ENCODE measurements at regions of chr6 and their contacts with region 1.

Region 1: DNA sequence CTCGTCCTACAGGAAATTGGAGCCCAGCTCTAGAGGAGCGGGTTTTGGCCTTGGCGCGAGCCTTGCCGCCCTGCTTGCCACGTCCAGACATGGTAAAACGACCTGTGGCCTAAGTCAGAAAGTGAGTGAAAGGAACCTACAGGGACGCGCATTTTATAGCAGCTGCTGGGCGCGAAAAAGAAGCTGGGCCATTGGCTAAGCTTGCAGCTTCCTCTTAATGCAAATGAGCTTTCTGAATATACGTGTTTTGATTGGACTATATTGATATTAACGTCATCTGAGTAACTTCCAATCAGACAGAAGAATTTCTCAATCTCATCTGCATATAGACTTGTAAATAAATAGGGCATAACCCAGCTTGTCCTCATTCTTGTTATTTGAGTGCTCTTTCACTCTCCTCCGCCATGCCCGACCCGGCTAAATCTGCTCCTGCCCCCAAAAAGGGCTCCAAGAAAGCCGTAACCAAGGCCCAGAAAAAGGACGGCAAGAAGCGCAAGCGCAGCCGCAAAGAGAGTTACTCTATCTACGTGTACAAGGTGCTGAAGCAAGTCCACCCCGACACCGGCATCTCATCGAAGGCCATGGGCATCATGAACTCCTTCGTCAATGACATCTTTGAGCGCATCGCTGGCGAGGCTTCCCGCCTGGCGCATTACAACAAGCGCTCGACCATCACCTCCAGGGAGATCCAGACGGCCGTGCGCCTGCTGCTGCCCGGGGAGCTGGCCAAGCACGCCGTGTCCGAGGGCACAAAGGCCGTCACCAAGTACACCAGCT is 18.9 kb downstream of the OR2B2 start:
- DNase-seq: peak; percentile 98
- H3K4me3 Mint-ChIP-seq: no peak overlapping the region
- H3K27ac Mint-ChIP-seq: no peak overlapping the region
- H3K4me1 Mint-ChIP-seq: peaks cover 45% of the 10 kb centered on the region
- H3K27me3 Mint-ChIP-seq: no peaks in the 10 kb centered on the region

Region 2: DNA sequence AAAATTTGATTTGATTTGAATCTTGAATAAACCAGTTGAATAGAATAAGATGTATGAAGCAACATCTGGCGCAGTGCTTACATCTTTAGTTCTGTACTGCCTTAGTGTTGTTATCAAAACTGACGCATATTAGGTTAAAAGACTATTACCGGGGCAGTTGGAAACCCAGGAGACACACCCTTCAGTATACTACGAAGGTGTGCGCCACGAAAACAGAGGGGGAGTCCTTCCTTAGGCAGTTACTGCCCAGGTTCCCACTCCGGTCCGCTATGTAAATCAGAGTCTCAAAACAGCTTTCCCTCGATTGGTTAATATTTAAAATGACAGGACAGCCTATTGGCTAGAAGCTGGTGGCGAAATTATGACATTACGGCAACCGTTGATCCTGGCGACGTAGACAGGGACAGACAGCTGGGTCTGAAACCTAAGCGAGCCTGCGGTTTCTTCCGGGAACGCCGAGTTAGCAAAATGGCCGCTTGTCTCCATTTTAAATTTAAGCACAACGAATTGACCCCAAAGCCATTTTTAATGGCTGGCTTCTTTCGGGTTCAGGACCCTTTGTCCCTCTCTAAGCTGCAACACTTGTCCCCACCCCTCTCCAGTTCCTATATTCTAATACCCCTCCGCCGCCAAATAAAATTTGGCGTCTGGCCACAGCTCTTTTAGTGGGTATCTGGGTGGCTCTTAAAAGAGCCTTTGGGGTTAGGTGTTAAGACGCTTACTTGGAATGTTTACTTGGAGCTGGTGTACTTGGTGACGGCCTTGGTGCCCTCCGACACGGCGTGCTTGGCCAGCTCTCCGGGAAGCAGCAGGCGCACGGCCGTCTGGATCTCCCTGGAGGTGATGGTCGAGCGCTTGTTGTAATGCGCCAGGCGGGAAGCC is 1770.2 kb before region 1 on chr6:
- intact Hi-C with region 1: loop called (anchors 5 kb)
- DNase-seq: peak; percentile 97
- H3K4me3 Mint-ChIP-seq: peak overlapping the region; percentile 96
- H3K27ac Mint-ChIP-seq: peak overlapping the region; percentile 99
- H3K4me1 Mint-ChIP-seq: peaks cover 44% of the 10 kb centered on the region
- H3K27me3 Mint-ChIP-seq: peaks cover 5% of the 10 kb centered on the region

Region 3: DNA sequence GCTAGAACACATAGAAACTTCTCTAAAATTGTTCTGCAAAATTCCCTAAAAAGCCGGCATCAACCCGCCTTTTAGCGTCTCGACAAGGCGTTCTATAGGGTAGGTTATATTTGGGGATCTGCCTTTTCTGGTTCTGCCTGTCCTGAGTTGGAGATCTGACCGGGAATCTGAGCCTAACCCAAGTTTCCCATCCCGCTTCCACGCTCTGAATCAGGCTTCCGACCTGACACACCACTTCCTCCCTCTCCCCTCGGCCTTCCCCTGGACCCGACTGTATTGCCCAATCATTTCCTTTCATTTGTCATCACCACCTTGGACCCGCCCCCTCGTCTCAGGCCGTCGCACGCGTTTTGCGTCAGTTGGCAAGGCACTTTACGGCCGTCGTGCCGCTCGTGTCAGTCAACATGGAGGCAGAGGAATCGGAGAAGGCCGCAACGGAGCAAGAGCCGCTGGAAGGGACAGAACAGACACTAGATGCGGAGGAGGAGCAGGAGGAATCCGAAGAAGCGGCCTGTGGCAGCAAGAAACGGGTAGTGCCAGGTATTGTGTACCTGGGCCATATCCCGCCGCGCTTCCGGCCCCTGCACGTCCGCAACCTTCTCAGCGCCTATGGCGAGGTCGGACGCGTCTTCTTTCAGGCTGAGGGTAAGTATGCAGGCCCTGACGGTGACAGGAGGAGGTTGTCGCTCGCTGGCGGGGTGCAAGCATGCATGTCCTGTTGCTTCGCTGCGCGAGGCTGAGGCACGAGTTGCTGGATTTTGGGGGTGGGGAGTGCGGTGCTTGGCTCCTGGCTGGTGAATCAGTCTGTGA is 1296.5 kb before region 1 on chr6 and contains the start of gene ABT1:
- intact Hi-C with region 1: loop called (anchors 10 kb)
- DNase-seq: peak; percentile 99
- H3K4me3 Mint-ChIP-seq: no peak within 1 kb of the TSS
- H3K27ac Mint-ChIP-seq: no peak within 1 kb of the TSS
- H3K4me1 Mint-ChIP-seq: peaks cover 32% of the 10 kb centered on the region
- H3K27me3 Mint-ChIP-seq: peaks cover 28% of the 10 kb centered on the region
- total RNA-seq, gene ABT1: 31.9 and 32.1 TPM in 2 replicates

Region 4: DNA sequence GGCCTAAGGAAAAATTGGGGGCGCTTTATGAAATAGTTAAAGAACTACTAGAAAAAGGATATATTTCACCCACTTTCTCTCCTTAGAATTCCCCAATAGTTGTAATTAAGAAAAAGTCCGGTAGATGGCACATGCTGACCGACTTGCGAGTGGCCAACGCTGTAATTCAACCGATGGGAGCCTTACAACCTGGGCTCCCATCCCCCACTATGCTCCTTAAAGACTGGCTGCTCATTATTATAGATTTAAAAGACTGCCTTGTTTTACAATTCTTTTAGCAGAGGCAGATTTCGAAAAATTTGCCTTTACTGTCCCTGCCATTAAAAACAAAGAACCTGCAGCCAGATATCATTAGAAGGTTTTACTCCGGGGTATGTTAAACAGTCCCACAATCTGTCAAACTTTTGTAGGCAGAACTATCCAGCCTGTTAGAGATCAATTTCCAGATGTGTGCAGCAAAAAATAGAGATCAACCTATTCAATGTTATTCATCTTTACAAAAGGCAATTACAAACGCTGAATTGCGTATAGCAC is 704.3 kb before region 1 on chr6:
- intact Hi-C with region 1: loop called (anchors 2 kb)
- DNase-seq: peak; percentile 86
- H3K4me3 Mint-ChIP-seq: peak overlapping the region; percentile 92
- H3K27ac Mint-ChIP-seq: no peak overlapping the region
- H3K4me1 Mint-ChIP-seq: peaks cover 10% of the 10 kb centered on the region
- H3K27me3 Mint-ChIP-seq: peaks cover 6% of the 10 kb centered on the region

Region 5: DNA sequence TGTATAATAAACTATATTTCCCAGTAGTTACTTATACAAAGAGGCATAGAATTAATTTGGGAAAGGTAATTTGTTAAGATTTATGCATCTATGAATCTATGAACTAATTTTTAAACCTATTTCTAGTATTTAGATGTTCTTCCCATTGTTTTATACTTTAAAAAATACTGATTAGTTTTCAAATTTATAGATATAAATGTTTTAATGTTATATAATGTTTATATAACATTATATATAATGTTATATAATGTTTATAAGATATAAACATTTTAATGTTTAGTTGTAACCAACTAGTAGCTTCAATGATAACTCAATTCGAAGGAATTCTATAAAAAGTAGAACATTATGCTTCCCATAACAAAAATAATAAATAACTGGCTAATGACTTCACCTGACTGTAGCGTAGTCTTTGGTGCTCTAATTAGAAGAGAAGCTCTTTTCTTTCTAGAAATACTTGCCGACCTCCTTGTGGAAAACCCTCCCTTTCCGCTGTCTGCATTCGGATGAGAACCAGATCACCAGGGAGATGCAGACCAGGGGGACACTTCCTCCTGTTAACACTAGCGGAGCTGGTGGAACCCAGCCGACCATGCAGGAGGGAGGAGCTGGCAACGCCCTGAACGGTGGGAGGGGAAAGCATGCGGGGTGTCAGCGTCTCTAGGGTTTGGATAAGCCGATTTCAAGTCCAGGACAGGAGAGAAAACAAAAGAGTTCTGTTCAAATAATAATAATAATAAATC is 139.4 kb before region 1 on chr6:
- intact Hi-C with region 1: loop called (anchors 2 kb)
- DNase-seq: peak; percentile 91
- H3K4me3 Mint-ChIP-seq: peak overlapping the region; percentile 86
- H3K27ac Mint-ChIP-seq: peak overlapping the region; percentile 83
- H3K4me1 Mint-ChIP-seq: peaks cover 49% of the 10 kb centered on the region
- H3K27me3 Mint-ChIP-seq: no peaks in the 10 kb centered on the region

Region 6: GRCh38 chr6:27838058-27838944 is 54.9 kb before region 1 on chr6:
- intact Hi-C with region 1: loop called (anchors 1 kb)
- DNase-seq: peak; percentile 96
- H3K4me3 Mint-ChIP-seq: no peak overlapping the region
- H3K27ac Mint-ChIP-seq: no peak overlapping the region
- H3K4me1 Mint-ChIP-seq: peaks cover 28% of the 10 kb centered on the region
- H3K27me3 Mint-ChIP-seq: no peaks in the 10 kb centered on the region

Region 7: DNA sequence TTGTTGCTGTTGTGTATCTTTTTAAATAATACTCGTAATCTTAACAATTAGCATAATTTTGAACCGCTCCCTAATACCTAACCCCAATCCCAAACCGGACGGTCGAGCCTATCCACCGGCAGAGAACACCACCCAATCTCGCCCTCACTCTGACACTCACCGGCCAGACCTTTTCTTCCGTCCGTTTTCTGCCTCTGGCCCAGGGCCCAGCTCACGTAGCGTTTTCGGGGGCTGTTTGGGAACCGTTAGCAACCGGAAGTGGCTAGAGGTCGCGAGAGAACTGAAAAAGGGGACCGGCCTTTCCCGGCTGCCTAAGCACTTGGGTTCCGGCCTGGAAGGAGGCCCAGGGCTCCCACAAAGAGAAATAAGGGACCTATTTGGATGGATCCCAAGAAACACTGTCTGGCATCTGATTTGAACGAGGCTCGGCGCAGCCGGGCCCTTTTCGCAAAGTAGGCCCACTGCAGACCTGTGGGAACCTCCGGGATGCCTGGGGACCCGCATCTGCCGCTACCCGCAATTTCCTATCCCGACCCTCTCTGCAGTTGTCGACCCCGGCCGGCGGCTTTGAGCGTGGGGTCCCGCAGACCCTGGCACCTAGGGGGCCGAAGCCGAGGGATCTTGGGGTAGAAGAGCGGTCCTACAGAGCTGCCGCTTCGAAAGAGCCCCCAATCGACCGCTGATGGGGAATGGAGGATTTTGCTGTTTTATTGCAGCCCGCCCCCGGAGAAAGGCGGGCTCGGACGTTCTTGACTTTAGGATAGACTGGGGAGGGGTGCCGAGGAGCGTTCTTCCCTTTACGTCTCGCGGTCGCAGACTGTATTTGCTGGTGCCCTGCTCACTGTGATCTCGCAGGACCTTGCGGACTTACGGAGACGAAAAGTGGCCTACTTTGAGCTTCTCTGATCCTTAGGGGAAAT is 243.6 kb after region 1 on chr6:
- intact Hi-C with region 1: loop called (anchors 10 kb)
- DNase-seq: peak; percentile 92
- H3K4me3 Mint-ChIP-seq: peak overlapping the region; percentile 93
- H3K27ac Mint-ChIP-seq: peak overlapping the region; percentile 94
- H3K4me1 Mint-ChIP-seq: peaks cover 58% of the 10 kb centered on the region
- H3K27me3 Mint-ChIP-seq: no peaks in the 10 kb centered on the region

Measured in activated CD4-positive, alpha-beta T cell treated with anti-CD3 and anti-CD28 coated beads, Interleukin-2, amount 10 ng/mL, durations not matched to agents 24 days and 14 days (primary cell).